Pancreas (tissue), 10 donors: ENCODE measurements at regions of chr3 and their contacts with region 1.

Region 1: GRCh38 chr3:157532529-157533297 is 29.5 kb upstream of the VEPH1 start:
- DNase-seq: peak in 3 of 6 donors; percentile 21 to 36 (median 24)
- ATAC-seq: peak; percentile 90 to 99 (median 97)
- H3K4me3 ChIP-seq: no peak overlapping the region
- H3K27ac ChIP-seq: no peak overlapping the region
- H3K4me1 ChIP-seq: no peaks in the 10 kb centered on the region
- H3K27me3 ChIP-seq: no peaks in the 10 kb centered on the region
- CTCF ChIP-seq: peak in 3 of 4 donors; percentile 51 to 61 (median 57)

Region 2: DNA sequence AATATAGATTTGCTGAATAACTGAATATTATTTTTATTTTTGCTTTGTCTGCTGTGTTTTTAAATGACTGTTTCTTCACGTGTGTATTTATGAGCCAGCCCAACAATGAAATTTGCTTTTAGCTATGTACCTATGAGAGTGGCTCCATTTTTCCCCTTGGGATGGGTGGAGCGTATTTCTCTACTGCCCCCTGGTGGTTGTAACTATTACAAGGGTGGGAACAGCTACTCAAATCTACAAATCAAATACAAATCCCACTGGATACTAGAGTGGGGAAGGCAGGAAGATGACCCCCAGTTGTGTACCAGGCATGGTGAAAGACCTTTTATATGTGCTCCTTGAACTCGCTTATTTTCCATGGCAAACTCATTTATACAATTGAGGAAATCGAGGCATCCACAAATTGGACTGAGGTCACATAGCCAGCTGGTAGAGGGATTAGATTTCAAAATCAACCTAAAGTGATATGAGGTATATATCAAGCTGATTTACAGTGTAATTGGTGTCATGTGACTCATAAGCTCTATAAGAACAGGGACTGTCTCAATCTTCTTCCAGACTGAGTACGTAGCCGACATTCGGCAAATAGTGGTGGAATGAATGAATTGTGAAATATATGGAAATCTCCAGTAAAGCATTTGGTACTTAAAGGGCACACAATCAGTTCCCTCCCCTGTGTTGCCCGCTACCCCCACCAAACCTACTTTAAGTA is 40.0 kb after region 1 on chr3:
- intact Hi-C with region 1: loop called in 1 of 3 experiments (anchors 5 kb)
- DNase-seq: peak in 2 of 6 donors; percentile 12 to 35
- ATAC-seq: peak; percentile 64 to 87 (median 74)
- H3K4me3 ChIP-seq: no peak overlapping the region
- H3K27ac ChIP-seq: no peak overlapping the region
- H3K4me1 ChIP-seq: peaks cover 0 to 13% (median 6%) of the 10 kb centered on the region in 3 donors
- H3K27me3 ChIP-seq: no peaks in the 10 kb centered on the region
- CTCF ChIP-seq: peak; percentile 56 to 69 (median 61)